CD8-positive, alpha-beta T cell (primary cell): ENCODE measurements at regions of chr6 and their contacts with region 1.

Region 1: GRCh38 chr6:159789377-159790148 is at the start of gene TCP1:
- DNase-seq: peak; percentile 96 to 100 (median 99)
- ATAC-seq: peak; percentile 81
- H3K4me3 ChIP-seq: peak within 1 kb of the TSS; percentile 86 to 99
- H3K4me3 Mint-ChIP-seq: peak within 1 kb of the TSS; percentile 99
- H3K27ac ChIP-seq: peak within 1 kb of the TSS; percentile 89 to 96
- H3K27ac Mint-ChIP-seq: peak within 1 kb of the TSS; percentile 98
- H3K4me1 ChIP-seq: peaks cover 57% of the 10 kb centered on the region
- H3K4me1 Mint-ChIP-seq: peaks cover 69% of the 10 kb centered on the region
- H3K27me3 ChIP-seq: no peaks in the 10 kb centered on the region
- H3K27me3 Mint-ChIP-seq: no peaks in the 10 kb centered on the region
- CTCF ChIP-seq: no peak
- total RNA-seq, gene TCP1: 221 to 222 TPM

Region 2: GRCh38 chr6:159754959-159755914 is 34.3 kb before region 1 on chr6:
- CTCF ChIA-PET with region 1: no interaction called
- POLR2A ChIA-PET with region 1: interaction called, 60 read pairs
- intact Hi-C with region 1: loop called (anchors 5 kb)
- DNase-seq: no peak
- ATAC-seq: no peak
- H3K4me3 ChIP-seq: no peak overlapping the region
- H3K4me3 Mint-ChIP-seq: no peak overlapping the region
- H3K27ac ChIP-seq: no peak overlapping the region
- H3K27ac Mint-ChIP-seq: no peak overlapping the region
- H3K4me1 ChIP-seq: no peaks in the 10 kb centered on the region
- H3K4me1 Mint-ChIP-seq: peaks cover 9% of the 10 kb centered on the region
- H3K27me3 ChIP-seq: no peaks in the 10 kb centered on the region
- H3K27me3 Mint-ChIP-seq: no peaks in the 10 kb centered on the region
- CTCF ChIP-seq: no peak

Region 3: GRCh38 chr6:159819932-159820640 is 30.5 kb after region 1 on chr6:
- CTCF ChIA-PET with region 1: interaction called, 7 read pairs
- POLR2A ChIA-PET with region 1: interaction called, 16 read pairs
- intact Hi-C with region 1: loop called in 1 of 2 experiments (anchors 1 kb)
- DNase-seq: peak in 7 of 9 experiments; percentile 4 to 61 (median 35)
- ATAC-seq: peak; percentile 76
- H3K4me3 ChIP-seq: peak overlapping the region; percentile 23 to 37
- H3K4me3 Mint-ChIP-seq: peak overlapping the region; percentile 84
- H3K27ac ChIP-seq: peak overlapping the region; percentile 12 to 45
- H3K27ac Mint-ChIP-seq: peak overlapping the region; percentile 94
- H3K4me1 ChIP-seq: peaks cover 23% of the 10 kb centered on the region
- H3K4me1 Mint-ChIP-seq: peaks cover 28% of the 10 kb centered on the region
- H3K27me3 ChIP-seq: no peaks in the 10 kb centered on the region
- H3K27me3 Mint-ChIP-seq: no peaks in the 10 kb centered on the region
- CTCF ChIP-seq: no peak

Region 4: DNA sequence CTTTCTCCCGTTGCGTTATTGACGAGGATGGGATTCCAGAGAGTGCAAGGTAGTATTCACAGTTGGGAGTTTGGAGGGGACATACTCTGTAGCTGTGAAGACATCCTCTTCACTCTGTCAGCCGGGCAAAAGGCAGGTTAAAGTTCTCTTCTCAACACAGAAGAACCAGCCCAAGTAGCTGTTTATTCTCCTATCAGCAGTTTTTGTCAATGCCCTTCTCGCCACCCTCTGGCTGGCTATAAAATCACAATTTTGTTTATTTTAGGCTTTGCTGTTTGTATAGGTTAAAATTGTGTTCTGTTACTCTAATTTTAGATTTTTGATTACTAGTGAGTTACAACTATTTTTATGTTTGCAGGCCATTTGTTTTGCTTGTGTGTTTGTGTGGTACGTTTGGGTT is 63.3 kb after region 1 on chr6:
- CTCF ChIA-PET with region 1: interaction called, 23 read pairs
- POLR2A ChIA-PET with region 1: interaction called, 13 read pairs
- intact Hi-C with region 1: loop called (anchors 1 to 2 kb)
- DNase-seq: peak in 3 of 9 experiments; percentile 29 to 56 (median 41)
- ATAC-seq: peak; percentile 58
- H3K4me3 ChIP-seq: no peak overlapping the region
- H3K4me3 Mint-ChIP-seq: no peak overlapping the region
- H3K27ac ChIP-seq: no peak overlapping the region
- H3K27ac Mint-ChIP-seq: no peak overlapping the region
- H3K4me1 ChIP-seq: no peaks in the 10 kb centered on the region
- H3K4me1 Mint-ChIP-seq: peaks cover 8% of the 10 kb centered on the region
- H3K27me3 ChIP-seq: no peaks in the 10 kb centered on the region
- H3K27me3 Mint-ChIP-seq: peaks cover 1% of the 10 kb centered on the region
- CTCF ChIP-seq: peak; percentile 51

Region 5: DNA sequence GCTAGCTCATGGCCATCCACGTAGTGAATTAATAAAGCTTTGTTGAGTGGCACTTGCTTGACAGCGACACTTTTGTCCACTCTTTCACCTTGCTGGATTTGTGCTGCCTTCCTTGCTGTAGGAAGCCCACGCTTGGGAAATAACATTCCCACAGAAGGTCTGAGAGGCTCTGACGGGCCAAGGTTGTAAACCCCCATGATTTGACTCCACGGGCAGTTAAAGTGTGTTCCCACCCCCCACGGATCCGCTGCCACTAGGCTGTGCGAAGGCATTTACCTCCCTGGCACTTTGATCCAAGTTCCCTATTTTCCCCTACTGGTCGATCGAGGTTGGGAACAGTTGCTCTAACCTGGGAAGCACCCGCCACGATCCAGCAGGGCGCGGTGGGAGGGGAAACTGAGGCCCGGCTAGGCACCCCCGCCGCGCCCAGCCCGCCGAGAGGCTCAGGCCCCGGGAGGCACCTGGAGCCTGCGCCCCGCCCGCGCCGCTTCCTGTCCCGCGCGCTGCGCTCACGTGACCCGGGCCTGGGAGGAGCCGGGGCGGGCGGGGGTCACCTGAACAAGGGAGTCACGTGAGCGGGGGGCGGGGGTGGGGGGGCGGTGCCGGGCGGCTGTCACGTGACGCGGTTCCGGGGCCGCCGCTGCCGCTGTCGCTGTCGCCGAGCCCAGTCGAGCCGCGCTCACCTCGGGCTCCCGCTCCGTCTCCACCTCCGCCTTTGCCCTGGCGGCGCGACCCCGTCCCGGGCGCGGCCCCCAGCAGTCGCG is 179.1 kb after region 1 on chr6 and contains the start of gene IGF2R:
- CTCF ChIA-PET with region 1: no interaction called
- POLR2A ChIA-PET with region 1: interaction called, 7 read pairs
- intact Hi-C with region 1: loop called (anchors 2 kb)
- DNase-seq: peak; percentile 86 to 96 (median 94)
- ATAC-seq: peak; percentile 85
- H3K4me3 ChIP-seq: peak within 1 kb of the TSS; percentile 64 to 67
- H3K4me3 Mint-ChIP-seq: peak within 1 kb of the TSS; percentile 91
- H3K27ac ChIP-seq: peak within 1 kb of the TSS; percentile 59 to 82
- H3K27ac Mint-ChIP-seq: peak within 1 kb of the TSS; percentile 89
- H3K4me1 ChIP-seq: peaks cover 36% of the 10 kb centered on the region
- H3K4me1 Mint-ChIP-seq: peaks cover 42% of the 10 kb centered on the region
- H3K27me3 ChIP-seq: no peaks in the 10 kb centered on the region
- H3K27me3 Mint-ChIP-seq: no peaks in the 10 kb centered on the region
- CTCF ChIP-seq: no peak
- total RNA-seq, gene IGF2R: 38.5 to 40.6 TPM

Region 6: DNA sequence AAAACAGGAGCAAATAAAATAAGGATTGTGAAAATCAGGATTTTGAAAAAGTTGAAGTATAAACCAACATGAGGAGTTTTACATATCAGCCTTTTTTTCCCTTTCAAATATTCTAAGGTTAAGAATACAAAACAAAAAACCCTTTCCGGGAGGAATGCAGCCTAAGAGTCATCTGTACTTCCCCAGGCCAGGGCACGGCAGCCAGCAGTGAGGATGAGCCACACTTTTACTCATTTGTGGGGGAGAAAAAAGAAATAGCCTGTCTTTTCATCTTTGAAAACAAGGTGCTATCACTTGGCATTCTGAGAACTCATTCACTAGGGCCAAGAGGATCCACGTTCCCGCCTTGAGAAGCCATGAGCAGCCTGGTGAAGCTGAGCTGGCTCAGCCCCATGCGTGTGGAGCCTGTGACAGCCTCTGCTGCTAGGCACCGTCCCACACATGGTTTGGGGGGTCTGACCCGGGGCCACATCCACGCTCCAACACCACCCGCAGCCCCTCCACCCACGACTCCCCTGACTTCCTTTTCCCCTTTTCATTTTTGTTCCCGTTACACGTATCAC is 343.3 kb after region 1 on chr6:
- CTCF ChIA-PET with region 1: no interaction called
- POLR2A ChIA-PET with region 1: no interaction called
- intact Hi-C with region 1: no loop called
- DNase-seq: no peak
- ATAC-seq: no peak
- H3K4me3 ChIP-seq: no peak overlapping the region
- H3K4me3 Mint-ChIP-seq: no peak overlapping the region
- H3K27ac ChIP-seq: no peak overlapping the region
- H3K27ac Mint-ChIP-seq: no peak overlapping the region
- H3K4me1 ChIP-seq: no peaks in the 10 kb centered on the region
- H3K4me1 Mint-ChIP-seq: no peaks in the 10 kb centered on the region
- H3K27me3 ChIP-seq: no peaks in the 10 kb centered on the region
- H3K27me3 Mint-ChIP-seq: peaks cover 2% of the 10 kb centered on the region
- CTCF ChIP-seq: no peak

Region 7: GRCh38 chr6:160455541-160456213 is 666.1 kb after region 1 on chr6:
- CTCF ChIA-PET with region 1: no interaction called
- POLR2A ChIA-PET with region 1: no interaction called
- intact Hi-C with region 1: loop called in 1 of 2 experiments (anchors 10 kb)
- DNase-seq: peak; percentile 47 to 84 (median 71)
- ATAC-seq: peak; percentile 99
- H3K4me3 ChIP-seq: no peak overlapping the region
- H3K4me3 Mint-ChIP-seq: no peak overlapping the region
- H3K27ac ChIP-seq: no peak overlapping the region
- H3K27ac Mint-ChIP-seq: no peak overlapping the region
- H3K4me1 ChIP-seq: peaks cover 19% of the 10 kb centered on the region
- H3K4me1 Mint-ChIP-seq: peaks cover 36% of the 10 kb centered on the region
- H3K27me3 ChIP-seq: peaks cover 0 to 5% of the 10 kb centered on the region in 2 experiments
- H3K27me3 Mint-ChIP-seq: peaks cover 36% of the 10 kb centered on the region
- CTCF ChIP-seq: peak; percentile 94